H1 (cell line): ENCODE measurements at regions of chr17 and their contacts with region 1.

Region 1: DNA sequence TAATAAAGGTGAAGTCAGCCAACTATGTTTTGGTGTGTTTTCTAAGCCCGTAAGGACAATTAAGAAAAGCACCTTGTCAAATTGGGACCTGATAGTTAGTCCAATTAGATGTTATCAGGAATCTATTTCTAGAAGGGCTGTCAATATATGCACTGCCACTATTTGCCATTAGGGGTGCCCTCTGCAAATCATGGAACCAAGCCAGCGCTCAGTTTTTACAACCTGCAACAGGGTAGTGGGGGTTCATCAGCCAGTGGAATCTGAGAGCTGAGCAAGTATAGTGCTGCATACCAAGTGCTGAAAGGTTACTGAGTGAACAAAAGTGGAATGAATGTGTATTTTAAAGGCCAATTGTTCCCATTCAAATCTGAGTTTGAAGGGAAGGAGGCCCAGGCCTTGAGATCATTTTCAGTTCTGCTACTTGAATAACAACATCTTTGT is 10.4 kb downstream of the PRR11 start:
- DNase-seq: peak; percentile 27 to 57
- H3K4me3 ChIP-seq: no peak overlapping the region
- H3K27ac ChIP-seq: no peak overlapping the region
- H3K4me1 ChIP-seq: peaks cover 0 to 4% (median 1%) of the 10 kb centered on the region in 4 experiments; a peak in 3 of 7 replicates
- H3K27me3 ChIP-seq: no peaks in the 10 kb centered on the region
- CTCF ChIP-seq: peak; percentile 29 to 73 (median 57)
- EP300 ChIP-seq: no peak
- POLR2A ChIP-seq: peak in 1 of 2 experiments; percentile 20; a peak in 1 of 3 replicates
- RAD21 ChIP-seq: peak; percentile 47 to 48

Region 2: DNA sequence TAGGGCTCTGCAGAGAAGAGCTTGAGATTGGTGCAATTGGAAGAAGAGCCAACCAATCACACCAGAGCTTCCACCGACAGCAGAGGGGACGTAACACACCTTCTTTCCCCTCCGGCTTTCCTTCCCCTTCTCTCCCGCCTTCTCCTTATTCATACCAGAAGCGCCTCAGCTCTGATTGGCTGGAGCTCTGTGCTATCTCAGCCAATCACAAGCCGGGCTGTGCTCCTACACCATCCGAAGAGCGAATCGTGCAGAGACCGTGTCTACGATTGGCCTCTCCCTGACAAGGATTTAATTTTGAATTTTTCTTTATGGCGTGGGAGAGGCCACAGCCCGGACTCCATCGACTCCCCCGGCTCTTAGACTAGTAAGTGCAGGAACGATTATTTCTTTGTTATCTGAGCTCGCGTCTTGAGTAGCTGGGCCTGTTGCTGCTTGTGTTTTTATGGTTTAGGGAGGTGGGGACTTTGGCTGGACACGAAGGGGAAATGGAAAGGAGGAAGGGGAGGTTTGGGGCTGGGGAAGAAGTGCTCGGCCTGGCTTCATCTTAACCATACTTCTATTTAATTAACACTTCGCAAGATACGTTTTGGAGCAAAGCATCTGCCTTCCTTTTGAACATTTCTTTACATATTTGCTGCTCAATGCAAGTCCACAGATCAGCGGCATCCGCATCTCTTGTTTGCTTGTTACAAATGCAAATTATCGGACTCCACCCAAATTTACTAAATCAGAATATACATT is 10.3 kb before region 1 on chr17 and contains the start of gene PRR11:
- CTCF ChIA-PET with region 1: interaction called, 9 read pairs
- POLR2A ChIA-PET with region 1: interaction called, 15 read pairs
- DNase-seq: peak in 1 of 2 experiments; percentile 80
- H3K4me3 ChIP-seq: peak within 1 kb of the TSS; percentile 90 to 96 (median 94)
- H3K27ac ChIP-seq: peak within 1 kb of the TSS; percentile 92
- H3K4me1 ChIP-seq: peaks cover 0 to 8% (median 3%) of the 10 kb centered on the region in 4 experiments; a peak in 4 of 7 replicates
- H3K27me3 ChIP-seq: no peaks in the 10 kb centered on the region
- CTCF ChIP-seq: no peak
- EP300 ChIP-seq: no peak
- POLR2A ChIP-seq: no peak; a peak in 1 of 3 replicates
- RAD21 ChIP-seq: no peak
- total RNA-seq, gene PRR11: 81.1 and 83.0 TPM in 2 replicates

Region 3: DNA sequence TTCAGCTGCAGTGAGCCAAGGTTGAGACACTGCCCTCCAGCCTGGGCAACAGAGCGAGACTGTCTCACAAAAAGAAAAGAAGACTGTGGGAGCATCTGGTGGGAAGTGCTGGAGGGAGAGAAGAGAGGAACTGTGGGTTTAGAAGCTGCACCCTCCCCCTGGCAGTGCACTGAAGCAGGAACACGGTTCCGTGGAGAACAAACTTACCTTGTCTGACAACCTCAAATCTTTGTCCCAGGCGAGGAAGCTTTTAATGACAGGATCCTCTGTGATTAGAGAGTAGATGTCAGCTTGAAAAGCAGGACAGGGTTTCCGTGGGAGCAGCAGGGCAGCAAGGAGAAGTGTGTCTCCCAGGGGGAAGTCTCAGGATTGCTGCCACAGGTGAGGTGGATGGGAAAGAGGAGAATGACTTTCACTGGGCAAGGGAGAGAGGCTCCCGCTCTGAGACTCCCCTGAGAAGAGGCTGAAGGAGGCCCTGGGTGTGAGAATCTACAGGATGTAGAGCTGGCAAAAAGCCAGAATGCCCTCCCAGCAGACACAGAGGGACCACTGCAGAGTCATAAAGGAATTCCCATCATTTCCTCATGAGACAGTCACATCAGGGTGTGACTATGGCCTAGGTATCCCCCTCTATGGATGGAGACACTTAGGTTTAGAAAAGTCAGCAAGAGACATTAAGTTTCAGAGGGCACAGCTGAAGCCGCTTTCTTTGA is 12.5 kb after region 1 on chr17:
- CTCF ChIA-PET with region 1: interaction called, 18 read pairs
- POLR2A ChIA-PET with region 1: interaction called, 3 read pairs
- DNase-seq: no peak
- H3K4me3 ChIP-seq: no peak overlapping the region
- H3K27ac ChIP-seq: no peak overlapping the region
- H3K4me1 ChIP-seq: no peaks in the 10 kb centered on the region
- H3K27me3 ChIP-seq: no peaks in the 10 kb centered on the region
- CTCF ChIP-seq: no peak
- EP300 ChIP-seq: no peak
- POLR2A ChIP-seq: no peak
- RAD21 ChIP-seq: no peak